ENCODE measurements at regions of chrX and their contacts with region 1.

Region 1: GRCh38 chrX:120250522-120251271 is at the start of gene ZBTB33:
- DNase-seq: peak; percentile 80 to 89
- ATAC-seq: peak; percentile 95 to 96
- H3K4me3 ChIP-seq: peak within 1 kb of the TSS; percentile 66 to 83 (median 81)
- H3K27ac ChIP-seq: peak within 1 kb of the TSS; percentile 89 to 94 (median 91)
- H3K4me1 ChIP-seq: peaks cover 0 to 5% of the 10 kb centered on the region in 2 donors
- H3K27me3 ChIP-seq: no peaks in the 10 kb centered on the region
- CTCF ChIP-seq: peak; percentile 60 to 74 (median 62)
- POLR2A ChIP-seq: peak; percentile 58 to 65
- total RNA-seq, gene ZBTB33: 9.2 to 12.4 (median 9.8) TPM

Region 2: GRCh38 chrX:118562582-118563164 is 1688.0 kb before region 1 on chrX:
- in situ Hi-C with region 1: no loop called
- intact Hi-C with region 1: no loop called
- DNase-seq: no peak
- ATAC-seq: no peak
- H3K4me3 ChIP-seq: no peak overlapping the region
- H3K27ac ChIP-seq: no peak overlapping the region
- H3K4me1 ChIP-seq: no peaks in the 10 kb centered on the region
- H3K27me3 ChIP-seq: no peaks in the 10 kb centered on the region
- CTCF ChIP-seq: no peak
- POLR2A ChIP-seq: no peak

Region 3: GRCh38 chrX:120021927-120022326 is 228.8 kb before region 1 on chrX:
- in situ Hi-C with region 1: no loop called
- intact Hi-C with region 1: no loop called
- DNase-seq: no peak
- ATAC-seq: no peak
- H3K4me3 ChIP-seq: no peak overlapping the region
- H3K27ac ChIP-seq: no peak overlapping the region
- H3K4me1 ChIP-seq: no peaks in the 10 kb centered on the region
- H3K27me3 ChIP-seq: peaks cover 0 to 4% (median 3%) of the 10 kb centered on the region in 3 donors
- CTCF ChIP-seq: no peak
- POLR2A ChIP-seq: no peak

Region 4: GRCh38 chrX:120308959-120309872 is 58.5 kb after region 1 on chrX:
- in situ Hi-C with region 1: no loop called
- intact Hi-C with region 1: loop called (anchors 5 kb)
- DNase-seq: peak; percentile 6 to 53
- ATAC-seq: peak; percentile 80 to 87
- H3K4me3 ChIP-seq: peak overlapping the region; percentile 44 to 50 (median 45)
- H3K27ac ChIP-seq: no peak overlapping the region
- H3K4me1 ChIP-seq: peaks cover 4 to 5% of the 10 kb centered on the region in 2 donors
- H3K27me3 ChIP-seq: peaks cover 0 to 11% (median 0%) of the 10 kb centered on the region in 3 donors
- CTCF ChIP-seq: peak in 3 of 5 experiments; percentile 11 to 42 (median 34)
- POLR2A ChIP-seq: no peak

Region 5: DNA sequence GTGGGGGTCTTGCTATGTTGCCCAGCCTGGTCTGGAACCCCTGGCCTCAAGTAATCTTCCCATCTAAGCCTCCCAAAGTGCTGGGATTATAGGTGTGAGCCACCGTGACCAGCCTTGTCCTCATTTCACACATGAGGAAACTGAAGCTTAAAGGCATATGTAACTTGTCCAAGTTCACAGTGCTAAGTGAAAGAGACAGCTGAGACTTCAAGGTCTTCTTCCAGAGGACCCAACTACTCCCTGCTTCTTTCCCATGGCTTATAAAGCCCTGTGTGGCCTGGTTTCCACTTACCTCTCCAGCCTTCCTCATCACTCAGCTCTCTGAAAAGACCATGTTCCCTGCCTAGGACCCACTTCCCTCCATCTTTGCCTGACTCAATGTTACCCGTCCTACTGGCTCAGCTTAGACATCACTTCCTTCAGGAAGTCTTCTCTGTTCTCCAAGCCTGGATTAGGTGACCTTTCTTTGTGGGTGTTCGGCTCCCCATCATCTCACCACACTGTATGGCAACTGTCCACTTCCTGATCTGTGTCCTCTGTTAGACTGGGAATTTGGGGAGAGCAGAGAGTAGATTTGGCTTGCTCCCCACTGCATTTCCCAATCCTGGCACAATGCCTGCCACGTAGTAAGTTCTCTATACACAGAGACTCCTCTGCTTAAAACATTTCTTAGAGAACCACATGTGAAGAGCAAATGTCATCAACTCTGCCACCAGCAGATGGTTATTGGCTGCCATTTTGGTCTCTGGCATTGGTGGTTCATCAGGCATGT is 248.8 kb after region 1 on chrX:
- in situ Hi-C with region 1: no loop called
- intact Hi-C with region 1: no loop called
- DNase-seq: no peak
- ATAC-seq: no peak
- H3K4me3 ChIP-seq: no peak overlapping the region
- H3K27ac ChIP-seq: no peak overlapping the region
- H3K4me1 ChIP-seq: no peaks in the 10 kb centered on the region
- H3K27me3 ChIP-seq: no peaks in the 10 kb centered on the region
- CTCF ChIP-seq: no peak
- POLR2A ChIP-seq: no peak

Measured in gastrocnemius medialis (tissue), 4 donors.